HCT116 (cell line): ENCODE measurements at regions of chr14 and their contacts with region 1.

Region 1: DNA sequence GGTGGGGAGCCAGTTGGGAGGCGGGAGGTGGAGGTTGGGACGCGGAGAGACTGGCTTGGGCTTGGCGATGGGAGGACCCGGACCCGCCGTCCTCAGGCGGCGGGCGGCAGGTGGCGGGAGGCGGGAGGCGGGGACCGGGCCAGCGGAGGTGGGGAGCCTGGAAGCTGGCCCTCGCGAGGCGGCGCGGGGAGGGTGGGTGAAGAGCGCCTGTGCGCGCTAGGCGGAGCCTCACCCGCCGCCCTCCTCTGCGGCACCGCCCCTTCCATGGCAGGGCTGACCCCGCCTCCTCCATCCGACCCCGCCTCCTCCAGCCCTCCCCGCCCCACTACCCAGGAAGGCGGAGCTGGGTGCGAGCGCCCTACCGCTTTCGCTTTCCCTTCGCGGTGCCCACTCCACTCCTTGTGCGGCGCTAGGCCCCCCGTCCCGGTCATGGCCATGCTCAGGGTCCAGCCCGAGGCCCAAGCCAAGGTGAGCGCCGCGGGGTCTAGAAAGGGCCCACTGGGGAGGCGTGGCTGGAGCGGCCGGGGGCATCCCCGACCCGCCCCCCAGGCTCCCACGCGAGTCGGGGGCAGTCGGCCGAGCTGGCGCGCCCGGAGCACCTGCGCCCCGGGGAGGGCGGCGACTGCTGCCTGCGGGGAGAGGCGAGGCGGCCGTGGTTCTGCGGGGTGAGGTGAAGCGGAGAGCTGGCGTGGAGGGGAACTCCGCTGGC is at the start of gene PSME1:
- DNase-seq: peak; percentile 71
- ATAC-seq: peak; percentile 92
- H3K4me3 ChIP-seq: peak within 1 kb of the TSS; percentile 71 to 94
- H3K27ac ChIP-seq: peak within 1 kb of the TSS; percentile 96
- H3K4me1 ChIP-seq: peaks cover 20 to 38% of the 10 kb centered on the region in 2 experiments
- H3K27me3 ChIP-seq: no peaks in the 10 kb centered on the region
- CTCF ChIP-seq: no peak
- POLR2A ChIP-seq: peak; percentile 70
- RAD21 ChIP-seq: no peak
- total RNA-seq, gene PSME1: 174 TPM

Region 2: GRCh38 chr14:24146978-24147760 is 11.2 kb after region 1 on chr14 and contains the start of gene RNF31:
- CTCF ChIA-PET with region 1: interaction called, 3 read pairs
- POLR2A ChIA-PET with region 1: interaction called, 24 read pairs
- RAD21 ChIA-PET with region 1: interaction called in 1 of 2 experiments, 4 read pairs
- intact Hi-C with region 1: no loop called
- DNase-seq: peak; percentile 96
- ATAC-seq: peak; percentile 88
- H3K4me3 ChIP-seq: peak within 1 kb of the TSS; percentile 97 to 99
- H3K27ac ChIP-seq: peak within 1 kb of the TSS; percentile 95
- H3K4me1 ChIP-seq: peaks cover 17 to 23% of the 10 kb centered on the region in 2 experiments
- H3K27me3 ChIP-seq: no peaks in the 10 kb centered on the region
- CTCF ChIP-seq: no peak
- POLR2A ChIP-seq: no peak
- RAD21 ChIP-seq: no peak
- total RNA-seq, gene RNF31: 78.0 TPM

Region 3: GRCh38 chr14:24271134-24271833 is 135.3 kb after region 1 on chr14 and contains the start of gene RABGGTA:
- CTCF ChIA-PET with region 1: no interaction called
- POLR2A ChIA-PET with region 1: no interaction called
- RAD21 ChIA-PET with region 1: no interaction called
- intact Hi-C with region 1: no loop called
- DNase-seq: peak; percentile 85
- ATAC-seq: peak; percentile 97
- H3K4me3 ChIP-seq: peak within 1 kb of the TSS; percentile 79 to 92
- H3K27ac ChIP-seq: peak within 1 kb of the TSS; percentile 86
- H3K4me1 ChIP-seq: peaks cover 9 to 22% of the 10 kb centered on the region in 2 experiments; a peak in 3 of 4 replicates
- H3K27me3 ChIP-seq: no peaks in the 10 kb centered on the region
- CTCF ChIP-seq: peak; percentile 39 to 75 (median 60); a peak in 5 of 6 replicates
- POLR2A ChIP-seq: peak; percentile 76
- RAD21 ChIP-seq: no peak
- total RNA-seq, gene RABGGTA: 40.8 TPM